Common myeloid progenitor, CD34-positive (primary cell): ENCODE measurements at regions of chr4 and their contacts with region 1.

Region 1: DNA sequence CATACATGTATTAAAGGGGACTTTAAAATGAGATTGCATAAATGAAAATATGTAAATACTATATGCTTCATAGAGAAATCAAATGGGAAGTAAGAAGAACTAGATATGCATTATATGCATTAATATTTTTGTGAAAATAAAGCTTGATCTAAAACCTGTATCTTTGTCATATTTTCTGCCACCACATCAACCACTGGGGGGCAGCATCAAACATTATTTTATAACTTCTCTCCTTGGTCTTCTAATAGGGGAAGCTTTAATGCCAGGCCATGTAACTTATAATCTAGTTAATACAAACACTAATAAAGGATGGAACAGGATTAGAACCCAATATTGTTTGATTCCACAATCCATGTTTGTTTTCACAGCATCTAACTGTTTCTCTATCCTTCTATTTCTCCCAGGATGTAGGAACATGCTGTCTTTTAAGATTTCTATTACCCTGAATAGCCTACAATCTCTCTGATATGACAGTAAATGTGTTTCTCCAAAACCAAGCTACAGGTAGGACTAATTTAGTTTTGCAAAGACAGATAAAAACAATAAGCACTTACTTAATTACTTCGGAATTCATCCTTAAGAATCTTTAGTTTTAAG is 10.0 kb downstream of the QRFPR start:
- DNase-seq: peak; percentile 32 to 75 (median 66)
- H3K4me3 ChIP-seq: no peak overlapping the region
- H3K27ac ChIP-seq: no peak overlapping the region
- H3K4me1 ChIP-seq: no peaks in the 10 kb centered on the region
- H3K27me3 ChIP-seq: peaks cover 0 to 13% (median 7%) of the 10 kb centered on the region in 5 experiments

Region 2: GRCh38 chr4:121358473-121358872 is 12.4 kb before region 1 on chr4:
- CTCF ChIA-PET with region 1: interaction called, 10 read pairs
- POLR2A ChIA-PET with region 1: no interaction called
- DNase-seq: peak in 2 of 3 donors; percentile 30 to 44
- H3K4me3 ChIP-seq: no peak overlapping the region
- H3K27ac ChIP-seq: no peak overlapping the region
- H3K4me1 ChIP-seq: peaks cover 0 to 1% (median 0%) of the 10 kb centered on the region in 4 experiments
- H3K27me3 ChIP-seq: peaks cover 0 to 16% (median 3%) of the 10 kb centered on the region in 5 experiments

Region 3: DNA sequence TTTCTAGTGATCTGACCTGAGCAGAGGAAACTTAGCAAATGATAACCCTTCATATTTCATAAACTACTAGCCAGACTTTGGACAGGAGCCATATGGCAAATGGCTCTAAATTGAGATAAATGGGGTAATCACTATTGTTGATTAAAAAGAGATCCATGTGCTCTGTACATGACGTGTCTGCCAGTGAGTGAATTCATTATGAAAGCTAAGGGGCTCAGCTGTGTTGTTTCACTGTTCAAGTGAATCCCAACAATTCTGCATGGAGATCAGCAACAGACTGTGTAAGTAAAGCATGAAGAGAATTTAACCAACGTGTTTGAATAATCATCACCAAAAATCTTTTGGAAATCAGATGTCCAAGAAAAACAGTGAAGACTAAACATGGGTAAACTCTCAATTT is 19.5 kb after region 1 on chr4:
- CTCF ChIA-PET with region 1: no interaction called
- POLR2A ChIA-PET with region 1: no interaction called
- DNase-seq: no peak
- H3K4me3 ChIP-seq: no peak overlapping the region
- H3K27ac ChIP-seq: no peak overlapping the region
- H3K4me1 ChIP-seq: no peaks in the 10 kb centered on the region
- H3K27me3 ChIP-seq: peaks cover 0 to 15% (median 2%) of the 10 kb centered on the region in 5 experiments

Region 4: DNA sequence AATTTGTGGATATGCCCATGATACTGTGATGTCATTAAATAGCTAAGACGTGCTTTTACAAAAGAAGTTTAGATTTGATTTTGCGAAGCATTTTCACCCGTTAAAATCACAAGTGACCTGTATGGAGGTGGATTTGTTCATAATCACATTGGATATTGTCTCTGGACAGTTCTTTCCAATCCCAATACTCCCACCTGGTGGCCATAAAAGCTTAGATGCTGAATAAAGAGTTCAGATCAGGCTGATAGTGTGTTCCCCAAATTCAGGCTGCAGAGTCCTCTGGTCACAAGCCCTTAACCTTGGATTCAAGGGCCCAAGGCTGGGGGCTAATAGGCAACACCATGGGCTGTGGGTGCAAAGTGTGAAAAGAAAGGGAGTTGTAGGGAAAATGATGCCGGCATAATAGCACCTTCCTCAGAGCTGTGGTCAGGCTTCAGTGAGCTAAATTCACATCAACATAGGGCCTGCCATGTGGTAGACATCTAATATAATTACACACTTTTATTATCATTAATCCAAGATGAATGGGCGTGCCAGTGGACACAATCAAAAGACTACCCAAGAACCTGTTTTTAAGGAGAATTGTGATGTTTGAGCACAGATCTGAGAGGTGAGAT is 366.0 kb after region 1 on chr4:
- CTCF ChIA-PET with region 1: interaction called, 17 read pairs
- POLR2A ChIA-PET with region 1: no interaction called
- DNase-seq: peak; percentile 34 to 63 (median 55)
- H3K4me3 ChIP-seq: no peak overlapping the region
- H3K27ac ChIP-seq: no peak overlapping the region
- H3K4me1 ChIP-seq: no peaks in the 10 kb centered on the region
- H3K27me3 ChIP-seq: peaks cover 0 to 9% (median 0%) of the 10 kb centered on the region in 5 experiments